ENCODE measurements at regions of chr12 and their contacts with region 1.

Region 1: DNA sequence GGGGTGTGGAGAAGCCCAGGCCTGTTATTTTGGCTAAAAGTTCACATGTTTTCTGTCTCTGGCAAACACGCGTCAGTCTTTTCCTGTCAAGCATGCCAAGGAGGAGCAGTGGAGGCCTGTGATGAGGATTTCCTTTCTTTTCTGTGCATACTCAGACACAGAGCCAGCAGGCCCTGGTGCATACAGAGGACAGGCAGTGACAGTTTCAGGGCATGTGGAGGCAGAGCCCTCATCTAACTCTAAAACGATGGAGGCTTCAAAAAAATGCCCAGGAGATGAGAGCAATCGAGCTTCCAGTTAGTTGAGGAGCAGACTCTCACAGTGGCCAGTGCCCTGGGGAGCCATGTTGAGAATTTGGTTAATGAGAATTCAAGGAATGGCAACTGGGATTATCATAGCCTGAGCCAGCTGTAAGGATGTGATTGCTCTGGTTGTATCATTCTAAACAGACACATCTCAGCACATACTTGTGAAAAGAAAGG is 66.5 kb downstream of the TRAFD1 start:
- DNase-seq: no peak
- H3K4me3 Mint-ChIP-seq: no peak overlapping the region
- H3K27ac Mint-ChIP-seq: no peak overlapping the region
- H3K4me1 Mint-ChIP-seq: no peaks in the 10 kb centered on the region
- H3K27me3 Mint-ChIP-seq: no peaks in the 10 kb centered on the region
- CTCF ChIP-seq: no peak

Region 2: GRCh38 chr12:112121780-112122565 is 69.9 kb before region 1 on chr12:
- CTCF ChIA-PET with region 1: no interaction called
- intact Hi-C with region 1: no loop called
- DNase-seq: no peak
- H3K4me3 Mint-ChIP-seq: no peak overlapping the region
- H3K27ac Mint-ChIP-seq: peak overlapping the region; percentile 28
- H3K4me1 Mint-ChIP-seq: peaks cover 28% of the 10 kb centered on the region
- H3K27me3 Mint-ChIP-seq: no peaks in the 10 kb centered on the region
- CTCF ChIP-seq: no peak

Region 3: GRCh38 chr12:112133418-112133817 is 58.5 kb before region 1 on chr12:
- CTCF ChIA-PET with region 1: interaction called, 13 read pairs
- intact Hi-C with region 1: no loop called
- DNase-seq: no peak
- H3K4me3 Mint-ChIP-seq: no peak overlapping the region
- H3K27ac Mint-ChIP-seq: no peak overlapping the region
- H3K4me1 Mint-ChIP-seq: no peaks in the 10 kb centered on the region
- H3K27me3 Mint-ChIP-seq: no peaks in the 10 kb centered on the region
- CTCF ChIP-seq: no peak